Common myeloid progenitor, CD34-positive (primary cell): ENCODE measurements at regions of chr19 and their contacts with region 1.

Region 1: GRCh38 chr19:1064661-1065605 is 2.0 kb upstream of the ARHGAP45 start:
- DNase-seq: peak; percentile 74 to 78 (median 77)
- H3K4me3 ChIP-seq: peak overlapping the region in 1 of 7 experiments; percentile 10
- H3K27ac ChIP-seq: no peak overlapping the region
- H3K4me1 ChIP-seq: peaks cover 0 to 51% (median 43%) of the 10 kb centered on the region in 4 experiments
- H3K27me3 ChIP-seq: no peaks in the 10 kb centered on the region

Region 2: GRCh38 chr19:1009041-1009975 is 55.6 kb before region 1 on chr19:
- CTCF ChIA-PET with region 1: no interaction called
- POLR2A ChIA-PET with region 1: no interaction called
- DNase-seq: no peak
- H3K4me3 ChIP-seq: no peak overlapping the region
- H3K27ac ChIP-seq: no peak overlapping the region
- H3K4me1 ChIP-seq: no peaks in the 10 kb centered on the region
- H3K27me3 ChIP-seq: no peaks in the 10 kb centered on the region

Region 3: DNA sequence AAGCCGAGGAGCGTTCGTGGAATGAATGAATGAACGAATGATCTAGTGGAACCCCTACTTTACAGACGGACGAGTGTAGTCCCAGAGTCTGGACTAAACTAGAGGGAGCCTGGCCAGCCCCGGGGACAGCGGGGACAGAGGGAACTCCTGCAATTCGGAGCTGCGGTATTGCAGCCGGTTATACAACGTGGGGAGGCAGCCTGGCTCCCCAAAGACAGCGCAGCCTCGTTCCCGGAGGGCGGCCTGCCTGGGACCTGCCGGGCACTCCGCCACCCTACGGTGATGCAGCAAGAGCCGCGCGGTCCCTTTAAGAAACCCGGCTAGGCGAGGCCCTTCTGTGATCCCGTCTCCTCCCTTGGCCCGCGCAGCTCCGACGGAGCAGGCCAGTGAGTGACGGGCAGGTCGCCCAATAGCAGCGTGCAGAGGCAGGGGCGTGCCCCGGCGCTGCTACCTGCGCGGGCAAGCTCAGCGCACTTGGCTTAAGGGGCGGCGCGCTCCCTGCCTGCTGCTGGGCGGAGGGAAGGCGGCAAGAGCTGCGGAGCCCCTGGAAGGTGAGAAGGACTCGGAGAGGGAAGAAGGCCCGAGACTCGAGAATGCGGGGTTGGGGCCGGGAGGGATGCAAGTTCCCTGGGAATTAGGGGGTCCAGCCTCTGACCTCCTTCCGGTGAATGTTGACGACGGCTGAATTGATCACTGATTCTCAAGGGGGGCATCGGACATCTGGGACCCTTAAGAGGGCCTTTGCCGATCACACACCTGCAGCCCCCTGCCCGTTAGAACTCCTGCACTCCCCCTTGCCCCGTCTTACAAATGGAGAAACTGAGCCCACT is 25.1 kb before region 1 on chr19 and contains the start of gene ABCA7:
- CTCF ChIA-PET with region 1: interaction called, 18 read pairs
- POLR2A ChIA-PET with region 1: interaction called, 4 read pairs
- DNase-seq: peak; percentile 97 to 99 (median 98)
- H3K4me3 ChIP-seq: peak within 1 kb of the TSS; percentile 23 to 80 (median 74)
- H3K27ac ChIP-seq: no peak within 1 kb of the TSS
- H3K4me1 ChIP-seq: peaks cover 6 to 46% (median 44%) of the 10 kb centered on the region in 4 experiments
- H3K27me3 ChIP-seq: no peaks in the 10 kb centered on the region

Region 4: GRCh38 chr19:1087813-1088415 is 23.0 kb after region 1 on chr19:
- CTCF ChIA-PET with region 1: interaction called, 34 read pairs
- POLR2A ChIA-PET with region 1: interaction called, 5 read pairs
- DNase-seq: peak; percentile 86 to 95 (median 94)
- H3K4me3 ChIP-seq: peak overlapping the region in 2 of 7 experiments; percentile 2 to 23
- H3K27ac ChIP-seq: peak overlapping the region in 1 of 2 experiments; percentile 49
- H3K4me1 ChIP-seq: peaks cover 2 to 39% (median 37%) of the 10 kb centered on the region in 4 experiments
- H3K27me3 ChIP-seq: no peaks in the 10 kb centered on the region

Region 5: GRCh38 chr19:1154731-1155351 is 89.9 kb after region 1 on chr19:
- CTCF ChIA-PET with region 1: no interaction called
- POLR2A ChIA-PET with region 1: no interaction called
- DNase-seq: no peak
- H3K4me3 ChIP-seq: no peak overlapping the region
- H3K27ac ChIP-seq: no peak overlapping the region
- H3K4me1 ChIP-seq: no peaks in the 10 kb centered on the region
- H3K27me3 ChIP-seq: no peaks in the 10 kb centered on the region

Region 6: DNA sequence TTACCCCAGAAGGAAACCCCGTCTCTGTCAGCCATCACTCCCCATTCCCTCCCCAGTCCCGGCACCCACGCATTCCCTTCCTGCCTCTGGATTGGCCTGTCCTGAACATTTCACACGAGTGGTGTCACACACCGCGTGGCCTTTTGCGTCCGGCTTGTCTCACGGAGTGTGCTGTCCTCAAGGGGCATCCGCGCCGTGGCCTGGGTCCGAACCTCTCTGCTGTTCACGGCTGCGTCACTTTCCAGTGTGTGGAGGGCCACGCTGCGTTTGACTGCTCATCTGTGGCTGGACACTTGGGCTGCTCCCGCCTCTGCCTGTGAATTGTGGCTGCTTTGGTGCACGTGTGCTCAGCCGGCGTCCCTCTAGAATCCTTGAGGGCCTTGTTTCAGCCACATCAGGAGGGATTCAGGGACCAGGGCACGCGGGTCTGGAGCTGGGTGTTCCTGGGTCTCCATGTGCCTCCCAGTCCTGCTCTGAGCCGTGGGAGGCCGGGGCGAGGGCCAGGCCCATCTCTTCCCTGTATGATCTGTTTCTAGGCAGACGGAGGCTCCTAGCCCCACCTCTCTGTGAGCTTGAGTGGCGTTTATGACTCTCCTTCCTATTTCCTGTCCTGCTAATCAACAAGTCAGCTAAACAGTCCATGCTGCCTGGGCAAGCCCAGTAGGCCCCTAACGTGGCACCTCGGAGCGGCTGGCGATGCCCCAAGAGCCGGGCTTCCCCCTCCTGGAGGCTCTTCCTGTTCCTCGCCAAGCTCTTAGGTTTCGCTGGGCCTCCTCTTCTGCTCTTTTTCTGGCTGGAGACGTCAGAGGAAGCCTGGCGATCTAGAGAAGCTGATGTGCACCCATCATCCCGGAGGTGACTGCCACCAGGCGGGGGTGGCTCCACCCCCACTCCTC is 148.7 kb after region 1 on chr19:
- CTCF ChIA-PET with region 1: no interaction called
- POLR2A ChIA-PET with region 1: no interaction called
- DNase-seq: peak; percentile 94 to 98 (median 98)
- H3K4me3 ChIP-seq: peak overlapping the region in 4 of 7 experiments; percentile 40 to 63 (median 49)
- H3K27ac ChIP-seq: peak overlapping the region; percentile 83 to 89
- H3K4me1 ChIP-seq: peaks cover 0 to 49% (median 46%) of the 10 kb centered on the region in 4 experiments
- H3K27me3 ChIP-seq: no peaks in the 10 kb centered on the region